Naive thymus-derived CD4-positive, alpha-beta T cell (primary cell): ENCODE measurements at regions of chr6 and their contacts with region 1.

Region 1: GRCh38 chr6:28266962-28267694 is at the start of gene ZSCAN26:
- DNase-seq: peak; percentile 67 to 91 (median 87)
- ATAC-seq: peak; percentile 96
- H3K4me3 ChIP-seq: peak within 1 kb of the TSS; percentile 96
- H3K4me3 Mint-ChIP-seq: peak within 1 kb of the TSS in 1 of 10 donors; percentile 30
- H3K27ac ChIP-seq: peak within 1 kb of the TSS; percentile 91
- H3K27ac Mint-ChIP-seq: peak within 1 kb of the TSS in 1 of 9 donors; percentile 48
- H3K4me1 ChIP-seq: peaks cover 0 to 24% of the 10 kb centered on the region in 2 donors
- H3K4me1 Mint-ChIP-seq: peaks cover 6 to 37% (median 24%) of the 10 kb centered on the region in 7 donors
- H3K27me3 ChIP-seq: no peaks in the 10 kb centered on the region
- H3K27me3 Mint-ChIP-seq: peaks cover 0 to 7% (median 0%) of the 10 kb centered on the region in 5 donors
- total RNA-seq, gene ZSCAN26: 8.0 to 27.8 (median 12.5) TPM

Region 2: DNA sequence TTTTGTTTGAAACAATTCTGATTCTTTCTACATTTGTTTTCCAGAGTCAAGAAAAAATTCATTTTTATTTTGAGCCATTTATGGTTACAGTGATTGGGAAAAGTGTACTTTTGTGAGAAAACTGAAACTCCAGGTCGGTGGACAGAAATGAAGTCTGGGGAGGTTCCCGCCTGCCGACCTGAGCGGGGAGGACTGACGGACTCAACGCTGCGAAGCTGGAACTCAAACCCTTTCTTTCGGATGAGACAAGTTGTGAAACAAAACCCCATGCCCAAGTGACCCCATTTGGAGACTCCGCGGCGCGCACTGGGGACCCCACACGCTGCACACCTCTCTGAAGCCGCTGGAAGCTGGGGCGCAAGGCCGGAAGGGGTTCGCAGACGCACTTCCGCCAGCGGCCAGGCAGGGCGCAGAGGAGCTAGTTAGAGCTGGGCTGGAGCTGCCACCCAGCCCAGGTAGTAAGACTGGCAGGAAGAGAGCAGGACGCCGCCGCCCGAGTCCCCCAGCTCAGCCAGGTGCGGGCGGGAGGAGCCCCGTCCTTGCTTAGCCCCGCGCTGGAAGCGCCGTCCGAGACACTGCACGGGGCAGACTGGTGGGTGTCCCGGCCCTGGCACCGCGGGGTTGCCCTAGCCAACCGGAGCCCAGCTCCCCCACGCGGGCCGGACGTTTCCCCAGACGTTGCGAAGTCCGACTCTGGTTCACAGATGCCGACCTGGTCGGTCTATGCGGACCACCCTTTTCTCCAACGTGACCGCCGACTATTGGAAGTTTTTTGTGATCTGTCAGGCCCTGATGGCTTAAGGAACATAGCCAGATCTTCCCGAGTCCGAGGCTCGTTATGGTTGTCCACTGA is 162.5 kb before region 1 on chr6:
- CTCF ChIA-PET with region 1: interaction called, 5 read pairs
- POLR2A ChIA-PET with region 1: interaction called, 10 read pairs
- intact Hi-C with region 1: loop called in 1 of 2 experiments (anchors 1 kb)
- DNase-seq: peak; percentile 68 to 82 (median 79)
- ATAC-seq: peak; percentile 99
- H3K4me3 ChIP-seq: peak overlapping the region; percentile 79
- H3K4me3 Mint-ChIP-seq: peak overlapping the region; percentile 86 to 95 (median 92)
- H3K27ac ChIP-seq: peak overlapping the region; percentile 76
- H3K27ac Mint-ChIP-seq: peak overlapping the region; percentile 76 to 96 (median 94)
- H3K4me1 ChIP-seq: peaks cover 0 to 7% of the 10 kb centered on the region in 2 donors
- H3K4me1 Mint-ChIP-seq: peaks cover 6 to 19% (median 9%) of the 10 kb centered on the region in 7 donors
- H3K27me3 ChIP-seq: no peaks in the 10 kb centered on the region
- H3K27me3 Mint-ChIP-seq: peaks cover 0 to 26% (median 16%) of the 10 kb centered on the region in 5 donors

Region 3: GRCh38 chr6:28281288-28282064 is 14.3 kb after region 1 on chr6 and contains the start of gene PGBD1:
- CTCF ChIA-PET with region 1: interaction called, 3 read pairs
- POLR2A ChIA-PET with region 1: interaction called, 11 read pairs
- intact Hi-C with region 1: loop called in 1 of 2 experiments (anchors 1 kb)
- DNase-seq: peak; percentile 12 to 62 (median 26)
- ATAC-seq: peak; percentile 79
- H3K4me3 ChIP-seq: peak within 1 kb of the TSS; percentile 46
- H3K4me3 Mint-ChIP-seq: peak within 1 kb of the TSS; percentile 73 to 89 (median 77)
- H3K27ac ChIP-seq: no peak within 1 kb of the TSS
- H3K27ac Mint-ChIP-seq: peak within 1 kb of the TSS in 3 of 9 donors; percentile 30 to 74 (median 31)
- H3K4me1 ChIP-seq: peaks cover 0 to 6% of the 10 kb centered on the region in 2 donors
- H3K4me1 Mint-ChIP-seq: peaks cover 7 to 17% (median 10%) of the 10 kb centered on the region in 7 donors
- H3K27me3 ChIP-seq: peaks cover 0 to 5% of the 10 kb centered on the region in 2 donors
- H3K27me3 Mint-ChIP-seq: peaks cover 7 to 46% (median 35%) of the 10 kb centered on the region in 5 donors
- total RNA-seq, gene PGBD1: 1.1 to 1.7 (median 1.2) TPM

Region 4: GRCh38 chr6:28349892-28350737 is 83.0 kb after region 1 on chr6 and contains the start of gene ZKSCAN3:
- CTCF ChIA-PET with region 1: interaction called, 3 read pairs
- POLR2A ChIA-PET with region 1: interaction called, 13 read pairs
- intact Hi-C with region 1: loop called (anchors 1 kb)
- DNase-seq: peak; percentile 53 to 83 (median 80)
- ATAC-seq: peak; percentile 98
- H3K4me3 ChIP-seq: peak within 1 kb of the TSS; percentile 80
- H3K4me3 Mint-ChIP-seq: peak within 1 kb of the TSS; percentile 94 to 100 (median 98)
- H3K27ac ChIP-seq: peak within 1 kb of the TSS; percentile 75
- H3K27ac Mint-ChIP-seq: peak within 1 kb of the TSS; percentile 90 to 97 (median 94)
- H3K4me1 ChIP-seq: peaks cover 0 to 7% of the 10 kb centered on the region in 2 donors
- H3K4me1 Mint-ChIP-seq: peaks cover 28 to 39% (median 35%) of the 10 kb centered on the region in 7 donors
- H3K27me3 ChIP-seq: peaks cover 0 to 4% of the 10 kb centered on the region in 2 donors
- H3K27me3 Mint-ChIP-seq: peaks cover 11 to 30% (median 12%) of the 10 kb centered on the region in 5 donors
- total RNA-seq, gene ZKSCAN3: 3.3 to 13.2 (median 5.8) TPM

Region 5: GRCh38 chr6:28399350-28400121 is 132.4 kb after region 1 on chr6 and contains the start of gene ZSCAN12:
- CTCF ChIA-PET with region 1: interaction called, 3 read pairs
- POLR2A ChIA-PET with region 1: interaction called, 4 read pairs
- intact Hi-C with region 1: loop called (anchors 1 kb)
- DNase-seq: peak; percentile 73 to 87 (median 81)
- ATAC-seq: peak; percentile 97
- H3K4me3 ChIP-seq: peak within 1 kb of the TSS; percentile 88
- H3K4me3 Mint-ChIP-seq: peak within 1 kb of the TSS; percentile 84 to 96 (median 92)
- H3K27ac ChIP-seq: peak within 1 kb of the TSS; percentile 74
- H3K27ac Mint-ChIP-seq: peak within 1 kb of the TSS; percentile 77 to 96 (median 93)
- H3K4me1 ChIP-seq: peaks cover 8 to 30% of the 10 kb centered on the region in 2 donors
- H3K4me1 Mint-ChIP-seq: peaks cover 30 to 54% (median 47%) of the 10 kb centered on the region in 7 donors
- H3K27me3 ChIP-seq: no peaks in the 10 kb centered on the region
- H3K27me3 Mint-ChIP-seq: peaks cover 0 to 33% (median 22%) of the 10 kb centered on the region in 5 donors
- total RNA-seq, gene ZSCAN12: 2.9 to 10.3 (median 7.4) TPM

Region 6: GRCh38 chr6:28586962-28587745 is 320.0 kb after region 1 on chr6:
- CTCF ChIA-PET with region 1: no interaction called
- POLR2A ChIA-PET with region 1: no interaction called
- intact Hi-C with region 1: loop called in 1 of 2 experiments (anchors 5 kb)
- DNase-seq: peak; percentile 29 to 70 (median 60)
- ATAC-seq: peak; percentile 77
- H3K4me3 ChIP-seq: peak overlapping the region; percentile 54
- H3K4me3 Mint-ChIP-seq: peak overlapping the region; percentile 82 to 90 (median 88)
- H3K27ac ChIP-seq: no peak overlapping the region
- H3K27ac Mint-ChIP-seq: peak overlapping the region in 8 of 9 donors; percentile 5 to 88 (median 60)
- H3K4me1 ChIP-seq: peaks cover 0 to 9% of the 10 kb centered on the region in 2 donors
- H3K4me1 Mint-ChIP-seq: peaks cover 11 to 43% (median 34%) of the 10 kb centered on the region in 7 donors
- H3K27me3 ChIP-seq: peaks cover 10 to 28% of the 10 kb centered on the region in 2 donors
- H3K27me3 Mint-ChIP-seq: peaks cover 57 to 85% (median 76%) of the 10 kb centered on the region in 5 donors